Colonic mucosa (tissue), 4 donors: ENCODE measurements at regions of chr22 and their contacts with region 1.

Region 1: GRCh38 chr22:43993027-43993760 is 30.9 kb upstream of the PARVB start:
- DNase-seq: peak; percentile 40
- H3K4me3 ChIP-seq: no peak overlapping the region
- H3K27ac ChIP-seq: no peak overlapping the region
- H3K4me1 ChIP-seq: no peaks in the 10 kb centered on the region
- H3K27me3 ChIP-seq: no peaks in the 10 kb centered on the region
- CTCF ChIP-seq: peak; percentile 95

Region 2: DNA sequence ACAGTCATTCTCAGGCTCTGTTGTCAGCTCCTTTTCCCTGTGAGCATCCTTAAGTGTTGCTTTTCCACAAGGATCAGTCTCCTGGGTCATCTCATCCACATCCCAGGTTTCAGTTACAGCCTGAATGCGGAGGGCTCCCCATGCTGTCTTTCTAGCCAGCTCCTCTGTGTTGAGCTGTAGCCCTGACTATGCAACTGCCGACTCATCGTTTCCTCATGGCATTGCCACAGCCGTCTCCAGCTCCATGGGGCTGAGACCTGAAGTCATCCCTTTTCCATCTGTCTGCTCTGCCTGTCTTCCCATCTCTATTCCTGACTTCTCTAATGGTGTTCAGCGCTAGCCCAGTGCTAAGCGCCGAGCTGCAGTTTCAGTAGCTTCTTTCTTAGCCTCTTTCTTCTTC is 26.1 kb before region 1 on chr22:
- intact Hi-C with region 1: no loop called
- DNase-seq: no peak
- H3K4me3 ChIP-seq: no peak overlapping the region
- H3K27ac ChIP-seq: no peak overlapping the region
- H3K4me1 ChIP-seq: no peaks in the 10 kb centered on the region
- H3K27me3 ChIP-seq: no peaks in the 10 kb centered on the region
- CTCF ChIP-seq: no peak

Region 3: GRCh38 chr22:44625981-44626687 is 632.9 kb after region 1 on chr22:
- intact Hi-C with region 1: loop called (anchors 1 kb)
- DNase-seq: peak; percentile 71
- H3K4me3 ChIP-seq: no peak overlapping the region
- H3K27ac ChIP-seq: no peak overlapping the region
- H3K4me1 ChIP-seq: no peaks in the 10 kb centered on the region
- H3K27me3 ChIP-seq: no peaks in the 10 kb centered on the region
- CTCF ChIP-seq: peak; percentile 92